ENCODE measurements at regions of chr15 and their contacts with region 1.

Region 1: GRCh38 chr15:63986751-63987341 is 59.4 kb downstream of the DAPK2 start:
- DNase-seq: peak; percentile 96
- ATAC-seq: peak; percentile 83
- H3K4me3 ChIP-seq: peak overlapping the region; percentile 1; the same call in 1 of the 2 replicates
- H3K27ac ChIP-seq: peak overlapping the region; percentile 92
- H3K4me1 ChIP-seq: peaks cover 77% of the 10 kb centered on the region
- H3K27me3 ChIP-seq: no peaks in the 10 kb centered on the region
- CTCF ChIP-seq: peak in 1 of 3 experiments; percentile 36; a peak in 2 of 6 replicates
- EP300 ChIP-seq: peak in 1 of 2 experiments; percentile 61; a peak in 2 of 4 replicates
- POLR2A ChIP-seq: no peak
- RAD21 ChIP-seq: peak; percentile 52

Region 2: GRCh38 chr15:63497642-63498467 is 489.0 kb before region 1 on chr15:
- CTCF ChIA-PET with region 1: no interaction called
- POLR2A ChIA-PET with region 1: no interaction called
- RAD21 ChIA-PET with region 1: no interaction called
- SMC1A ChIA-PET with region 1: no interaction called
- in situ Hi-C with region 1: no loop called
- intact Hi-C with region 1: no loop called
- DNase-seq: no peak
- ATAC-seq: peak; percentile 73
- H3K4me3 ChIP-seq: peak overlapping the region; percentile 4; the same call in 1 of the 2 replicates
- H3K27ac ChIP-seq: peak overlapping the region; percentile 80
- H3K4me1 ChIP-seq: peaks cover 69% of the 10 kb centered on the region
- H3K27me3 ChIP-seq: no peaks in the 10 kb centered on the region
- CTCF ChIP-seq: no peak
- EP300 ChIP-seq: no peak
- POLR2A ChIP-seq: no peak
- RAD21 ChIP-seq: no peak

Region 3: GRCh38 chr15:63735449-63735848 is 251.4 kb before region 1 on chr15:
- CTCF ChIA-PET with region 1: no interaction called
- POLR2A ChIA-PET with region 1: no interaction called
- RAD21 ChIA-PET with region 1: no interaction called
- SMC1A ChIA-PET with region 1: no interaction called
- in situ Hi-C with region 1: no loop called
- intact Hi-C with region 1: no loop called
- DNase-seq: no peak
- ATAC-seq: no peak
- H3K4me3 ChIP-seq: no peak overlapping the region
- H3K27ac ChIP-seq: no peak overlapping the region
- H3K4me1 ChIP-seq: no peaks in the 10 kb centered on the region
- H3K27me3 ChIP-seq: no peaks in the 10 kb centered on the region
- CTCF ChIP-seq: no peak
- EP300 ChIP-seq: no peak
- POLR2A ChIP-seq: no peak
- RAD21 ChIP-seq: no peak

Region 4: GRCh38 chr15:63811942-63812550 is 174.8 kb before region 1 on chr15:
- CTCF ChIA-PET with region 1: no interaction called
- POLR2A ChIA-PET with region 1: no interaction called
- RAD21 ChIA-PET with region 1: no interaction called
- SMC1A ChIA-PET with region 1: no interaction called
- in situ Hi-C with region 1: no loop called
- intact Hi-C with region 1: loop called (anchors 5 kb)
- DNase-seq: no peak
- ATAC-seq: no peak
- H3K4me3 ChIP-seq: no peak overlapping the region
- H3K27ac ChIP-seq: peak overlapping the region; percentile 28; the same call in 1 of the 2 replicates
- H3K4me1 ChIP-seq: peaks cover 5% of the 10 kb centered on the region; the same call in 1 of the 2 replicates
- H3K27me3 ChIP-seq: no peaks in the 10 kb centered on the region
- CTCF ChIP-seq: no peak
- EP300 ChIP-seq: no peak
- POLR2A ChIP-seq: no peak
- RAD21 ChIP-seq: no peak

Region 5: GRCh38 chr15:63881431-63881830 is 105.4 kb before region 1 on chr15:
- CTCF ChIA-PET with region 1: interaction called, 9 read pairs
- POLR2A ChIA-PET with region 1: interaction called, 8 read pairs
- RAD21 ChIA-PET with region 1: interaction called, 8 read pairs
- SMC1A ChIA-PET with region 1: interaction called, 12 read pairs
- in situ Hi-C with region 1: no loop called
- intact Hi-C with region 1: no loop called
- DNase-seq: peak; percentile 81
- ATAC-seq: peak; percentile 69
- H3K4me3 ChIP-seq: no peak overlapping the region
- H3K27ac ChIP-seq: peak overlapping the region; percentile 66
- H3K4me1 ChIP-seq: peaks cover 53% of the 10 kb centered on the region
- H3K27me3 ChIP-seq: no peaks in the 10 kb centered on the region
- CTCF ChIP-seq: 0 out of 6 replicates have a peak, but pooled peaks of 1 of the 3 experiments have one; percentile 7
- EP300 ChIP-seq: peak; percentile 16 to 51; a peak in 1 of 4 replicates
- POLR2A ChIP-seq: no peak
- RAD21 ChIP-seq: no peak

Region 6: GRCh38 chr15:63909819-63910437 is 76.9 kb before region 1 on chr15:
- CTCF ChIA-PET with region 1: interaction called, 3 read pairs
- POLR2A ChIA-PET with region 1: no interaction called
- RAD21 ChIA-PET with region 1: interaction called, 7 read pairs
- SMC1A ChIA-PET with region 1: interaction called, 12 read pairs
- in situ Hi-C with region 1: no loop called
- intact Hi-C with region 1: no loop called
- DNase-seq: no peak
- ATAC-seq: no peak
- H3K4me3 ChIP-seq: no peak overlapping the region
- H3K27ac ChIP-seq: no peak overlapping the region
- H3K4me1 ChIP-seq: peaks cover 14% of the 10 kb centered on the region
- H3K27me3 ChIP-seq: no peaks in the 10 kb centered on the region
- CTCF ChIP-seq: no peak
- EP300 ChIP-seq: no peak
- POLR2A ChIP-seq: no peak
- RAD21 ChIP-seq: no peak

Region 7: GRCh38 chr15:64004582-64004981 is 17.7 kb after region 1 on chr15:
- CTCF ChIA-PET with region 1: interaction called, 61 read pairs
- POLR2A ChIA-PET with region 1: interaction called, 21 read pairs
- RAD21 ChIA-PET with region 1: interaction called, 48 read pairs
- SMC1A ChIA-PET with region 1: interaction called, 66 read pairs
- in situ Hi-C with region 1: no loop called
- intact Hi-C with region 1: no loop called
- DNase-seq: no peak
- ATAC-seq: no peak
- H3K4me3 ChIP-seq: no peak overlapping the region
- H3K27ac ChIP-seq: no peak overlapping the region
- H3K4me1 ChIP-seq: peaks cover 17% of the 10 kb centered on the region
- H3K27me3 ChIP-seq: no peaks in the 10 kb centered on the region
- CTCF ChIP-seq: no peak
- EP300 ChIP-seq: no peak
- POLR2A ChIP-seq: no peak
- RAD21 ChIP-seq: no peak

Region 8: GRCh38 chr15:64093627-64094417 is 107.0 kb after region 1 on chr15 and contains the start of gene CIAO2A:
- CTCF ChIA-PET with region 1: interaction called, 12 read pairs
- POLR2A ChIA-PET with region 1: no interaction called
- RAD21 ChIA-PET with region 1: interaction called, 5 read pairs
- SMC1A ChIA-PET with region 1: interaction called, 8 read pairs
- in situ Hi-C with region 1: no loop called
- intact Hi-C with region 1: no loop called
- DNase-seq: peak; percentile 99
- ATAC-seq: peak; percentile 74
- H3K4me3 ChIP-seq: peak within 1 kb of the TSS; percentile 96
- H3K27ac ChIP-seq: peak within 1 kb of the TSS; percentile 94
- H3K4me1 ChIP-seq: peaks cover 32% of the 10 kb centered on the region
- H3K27me3 ChIP-seq: no peaks in the 10 kb centered on the region
- CTCF ChIP-seq: no peak
- EP300 ChIP-seq: no peak
- POLR2A ChIP-seq: peak; percentile 66; the same call in 1 of the 2 replicates
- RAD21 ChIP-seq: no peak
- polyA plus RNA-seq, gene CIAO2A: 264 to 303 TPM

Region 9: DNA sequence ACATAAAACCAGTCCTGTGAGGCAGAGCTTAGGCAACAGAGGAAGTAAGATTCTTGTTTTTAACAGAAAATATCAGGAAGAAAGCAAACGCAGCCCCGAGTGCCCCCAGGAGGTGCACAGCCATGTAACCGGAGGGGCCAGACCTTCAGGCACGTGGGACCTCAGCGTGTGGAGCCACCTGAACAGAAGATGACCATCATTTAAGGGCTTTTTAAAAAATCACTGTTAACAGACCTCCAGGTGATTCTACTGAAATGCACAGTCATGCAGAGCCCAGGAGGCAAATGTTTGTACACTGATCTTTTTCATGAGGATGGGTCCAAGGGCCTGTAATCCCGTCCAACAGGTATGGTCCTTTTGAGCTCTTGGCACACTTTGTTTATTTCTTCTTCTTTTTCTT is 964.0 kb after region 1 on chr15:
- CTCF ChIA-PET with region 1: no interaction called
- POLR2A ChIA-PET with region 1: no interaction called
- RAD21 ChIA-PET with region 1: no interaction called
- SMC1A ChIA-PET with region 1: no interaction called
- in situ Hi-C with region 1: no loop called
- intact Hi-C with region 1: no loop called
- DNase-seq: no peak
- ATAC-seq: peak; percentile 54
- H3K4me3 ChIP-seq: no peak overlapping the region
- H3K27ac ChIP-seq: no peak overlapping the region
- H3K4me1 ChIP-seq: no peaks in the 10 kb centered on the region
- H3K27me3 ChIP-seq: no peaks in the 10 kb centered on the region
- CTCF ChIP-seq: no peak
- EP300 ChIP-seq: no peak
- POLR2A ChIP-seq: no peak
- RAD21 ChIP-seq: no peak

Measured in GM12878 (cell line).